Activated CD8-positive, alpha-beta memory T cell treated with anti-CD3 and anti-CD28 coated beads, Interleukin-2, amount 10 ng/mL, durations not matched to agents 7 days and 5 days (primary cell): ENCODE measurements at regions of chr14 and their contacts with region 1.

Region 1: DNA sequence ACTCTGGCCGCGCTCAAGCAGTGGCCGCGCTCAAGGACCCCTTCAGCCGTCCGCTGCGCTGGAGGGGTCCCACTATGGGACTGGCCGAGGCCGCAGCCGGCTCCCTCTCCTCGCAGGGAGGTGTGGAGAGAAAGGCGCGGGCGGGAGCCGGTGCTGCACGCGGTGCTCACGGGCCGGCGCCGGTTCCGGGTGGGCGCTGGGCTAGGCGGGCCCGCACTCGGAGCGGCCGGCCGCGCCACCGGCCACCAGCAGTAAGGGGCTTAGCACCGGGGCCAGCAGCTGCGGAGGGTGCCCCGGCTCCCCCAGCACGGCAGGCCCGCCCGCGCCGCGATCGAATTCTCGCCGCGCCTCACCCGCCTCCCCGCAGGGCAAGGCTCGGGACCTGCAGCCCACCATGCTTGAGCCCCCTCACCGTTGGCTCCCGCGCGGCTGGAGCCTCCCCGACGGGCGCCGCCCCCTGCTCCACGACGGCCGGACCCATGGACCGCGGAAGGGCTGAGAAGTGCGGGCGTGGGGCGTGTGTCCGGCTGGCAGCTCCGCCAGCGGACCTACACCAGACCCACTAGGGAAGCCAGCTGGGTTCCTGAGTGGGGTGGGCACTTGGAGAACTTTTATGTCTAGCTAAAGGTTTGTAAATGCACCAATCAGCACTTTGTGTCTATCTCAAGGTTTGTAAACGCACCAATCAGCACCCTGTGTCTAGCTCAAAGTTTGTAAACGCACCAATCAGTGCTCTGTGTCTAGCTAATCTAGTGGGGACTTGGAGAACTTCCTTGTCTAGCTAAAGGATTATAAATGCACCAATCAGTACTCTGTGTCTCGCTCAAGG is 49.5 kb downstream of the KLHL28 start:
- DNase-seq: no peak
- ATAC-seq: peak; percentile 33
- H3K4me3 Mint-ChIP-seq: peak overlapping the region; percentile 9
- H3K27ac Mint-ChIP-seq: no peak overlapping the region
- H3K4me1 Mint-ChIP-seq: peaks cover 4% of the 10 kb centered on the region
- H3K27me3 Mint-ChIP-seq: peaks cover 37% of the 10 kb centered on the region

Region 2: GRCh38 chr14:44712024-44712815 is 200.0 kb before region 1 on chr14:
- CTCF ChIA-PET with region 1: no interaction called
- DNase-seq: no peak
- ATAC-seq: no peak
- H3K4me3 Mint-ChIP-seq: no peak overlapping the region
- H3K27ac Mint-ChIP-seq: no peak overlapping the region
- H3K4me1 Mint-ChIP-seq: no peaks in the 10 kb centered on the region
- H3K27me3 Mint-ChIP-seq: no peaks in the 10 kb centered on the region

Region 3: DNA sequence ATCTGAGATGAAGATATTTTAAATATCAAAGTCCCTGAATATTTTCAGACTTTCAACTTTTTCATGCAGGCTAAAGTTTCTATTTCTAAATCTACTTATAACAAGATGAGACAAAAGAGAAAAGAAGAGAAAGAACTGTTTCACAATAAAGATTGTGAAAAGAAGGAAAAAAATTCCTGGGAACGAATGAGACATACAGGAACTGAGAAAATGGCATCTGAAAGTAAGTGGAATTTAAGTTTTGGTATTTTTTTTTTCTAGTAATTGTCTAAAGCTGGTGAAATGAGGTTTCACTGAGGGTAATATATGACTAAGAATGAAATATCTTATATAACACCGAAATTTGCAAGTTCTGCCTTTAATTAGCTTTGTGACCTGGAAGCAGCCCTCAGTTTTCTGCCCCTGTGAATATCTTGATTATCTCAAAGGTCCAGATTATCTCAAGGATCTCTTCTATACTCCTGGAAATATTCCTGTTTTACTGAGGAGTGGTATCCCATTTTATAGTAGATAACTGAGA is 115.9 kb after region 1 on chr14:
- CTCF ChIA-PET with region 1: no interaction called
- DNase-seq: no peak
- ATAC-seq: no peak
- H3K4me3 Mint-ChIP-seq: no peak overlapping the region
- H3K27ac Mint-ChIP-seq: no peak overlapping the region
- H3K4me1 Mint-ChIP-seq: peaks cover 4% of the 10 kb centered on the region
- H3K27me3 Mint-ChIP-seq: no peaks in the 10 kb centered on the region

Region 4: DNA sequence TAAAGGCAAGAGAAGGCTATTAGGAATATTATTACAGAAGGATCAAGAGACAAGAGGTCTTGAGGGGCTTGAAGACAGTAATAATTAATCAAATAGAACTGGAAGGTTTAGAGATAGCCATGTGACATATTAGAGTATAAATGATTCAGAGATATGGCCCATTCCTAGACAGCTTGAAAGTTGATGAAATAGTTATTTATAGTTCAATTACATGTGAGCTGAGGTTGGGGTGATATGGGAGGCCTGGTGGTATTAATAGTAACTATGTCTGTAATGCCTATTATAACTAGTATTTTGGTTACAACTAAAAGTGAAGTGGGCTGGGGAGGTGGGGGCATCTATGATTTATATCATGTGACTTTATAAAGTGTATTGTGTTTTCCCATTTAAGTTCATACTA is 354.8 kb after region 1 on chr14:
- CTCF ChIA-PET with region 1: interaction called, 15 read pairs
- DNase-seq: no peak
- ATAC-seq: no peak
- H3K4me3 Mint-ChIP-seq: no peak overlapping the region
- H3K27ac Mint-ChIP-seq: no peak overlapping the region
- H3K4me1 Mint-ChIP-seq: peaks cover 4% of the 10 kb centered on the region
- H3K27me3 Mint-ChIP-seq: peaks cover 10% of the 10 kb centered on the region